PC-3 (cell line): ENCODE measurements at regions of chr14 and their contacts with region 1.

Region 1: DNA sequence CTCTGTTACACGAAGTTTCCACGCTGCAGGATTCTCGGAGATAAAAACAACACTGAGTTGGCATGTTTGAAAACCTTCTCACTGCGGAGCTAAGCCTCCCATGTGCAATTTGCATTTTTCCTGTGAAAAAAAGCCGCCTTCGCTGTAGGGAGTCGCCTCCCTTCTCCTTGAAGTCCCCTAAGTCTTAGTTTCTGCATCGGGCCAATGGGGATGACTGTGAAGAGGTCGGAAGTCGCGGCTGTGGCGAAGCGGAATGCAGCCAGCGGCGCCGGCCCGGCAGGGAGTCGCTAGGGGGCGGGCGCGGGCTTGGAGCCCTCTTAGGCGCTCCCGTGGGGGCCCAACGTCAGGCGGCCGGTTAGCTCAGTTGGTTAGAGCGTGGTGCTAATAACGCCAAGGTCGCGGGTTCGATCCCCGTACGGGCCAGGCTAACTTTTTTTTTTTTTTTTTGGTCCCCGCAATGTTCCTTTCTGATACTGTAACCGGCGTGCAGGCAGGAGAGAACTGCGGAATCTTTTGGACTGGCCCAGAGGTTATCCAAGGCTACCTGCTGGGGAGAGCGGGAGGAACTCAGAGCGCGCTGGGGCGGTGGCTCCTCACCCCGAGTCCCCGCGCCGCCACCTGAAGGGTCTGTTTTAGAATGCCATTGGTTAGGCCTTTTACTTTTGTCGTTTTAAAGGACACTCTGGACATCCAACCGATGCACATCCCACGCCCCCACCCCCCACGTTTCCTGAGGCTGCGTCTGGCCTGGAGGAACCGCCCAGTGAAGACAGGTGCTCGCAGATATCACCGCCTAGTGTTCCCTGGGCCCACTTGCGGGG is 2.6 kb upstream of the ZNF839 start:
- DNase-seq: peak; percentile 91
- ATAC-seq: peak; percentile 62
- H3K4me3 ChIP-seq: peak overlapping the region; percentile 72
- H3K27ac ChIP-seq: peak overlapping the region; percentile 61
- H3K4me1 ChIP-seq: peaks cover 56% of the 10 kb centered on the region
- H3K27me3 ChIP-seq: no peaks in the 10 kb centered on the region
- CTCF ChIP-seq: peak; percentile 67

Region 2: GRCh38 chr14:101972268-101972774 is 344.6 kb before region 1 on chr14:
- CTCF ChIA-PET with region 1: no interaction called
- POLR2A ChIA-PET with region 1: no interaction called
- intact Hi-C with region 1: loop called (anchors 5 kb)
- DNase-seq: peak; percentile 100
- ATAC-seq: peak; percentile 97
- H3K4me3 ChIP-seq: peak overlapping the region; percentile 59
- H3K27ac ChIP-seq: peak overlapping the region; percentile 99
- H3K4me1 ChIP-seq: peaks cover 72% of the 10 kb centered on the region
- H3K27me3 ChIP-seq: no peaks in the 10 kb centered on the region
- CTCF ChIP-seq: no peak

Region 3: GRCh38 chr14:102063091-102063802 is 253.7 kb before region 1 on chr14:
- CTCF ChIA-PET with region 1: no interaction called
- POLR2A ChIA-PET with region 1: no interaction called
- intact Hi-C with region 1: loop called (anchors 10 kb)
- DNase-seq: peak; percentile 96
- ATAC-seq: peak; percentile 94
- H3K4me3 ChIP-seq: peak overlapping the region; percentile 43
- H3K27ac ChIP-seq: peak overlapping the region; percentile 31
- H3K4me1 ChIP-seq: peaks cover 8% of the 10 kb centered on the region
- H3K27me3 ChIP-seq: no peaks in the 10 kb centered on the region
- CTCF ChIP-seq: peak; percentile 69

Region 4: DNA sequence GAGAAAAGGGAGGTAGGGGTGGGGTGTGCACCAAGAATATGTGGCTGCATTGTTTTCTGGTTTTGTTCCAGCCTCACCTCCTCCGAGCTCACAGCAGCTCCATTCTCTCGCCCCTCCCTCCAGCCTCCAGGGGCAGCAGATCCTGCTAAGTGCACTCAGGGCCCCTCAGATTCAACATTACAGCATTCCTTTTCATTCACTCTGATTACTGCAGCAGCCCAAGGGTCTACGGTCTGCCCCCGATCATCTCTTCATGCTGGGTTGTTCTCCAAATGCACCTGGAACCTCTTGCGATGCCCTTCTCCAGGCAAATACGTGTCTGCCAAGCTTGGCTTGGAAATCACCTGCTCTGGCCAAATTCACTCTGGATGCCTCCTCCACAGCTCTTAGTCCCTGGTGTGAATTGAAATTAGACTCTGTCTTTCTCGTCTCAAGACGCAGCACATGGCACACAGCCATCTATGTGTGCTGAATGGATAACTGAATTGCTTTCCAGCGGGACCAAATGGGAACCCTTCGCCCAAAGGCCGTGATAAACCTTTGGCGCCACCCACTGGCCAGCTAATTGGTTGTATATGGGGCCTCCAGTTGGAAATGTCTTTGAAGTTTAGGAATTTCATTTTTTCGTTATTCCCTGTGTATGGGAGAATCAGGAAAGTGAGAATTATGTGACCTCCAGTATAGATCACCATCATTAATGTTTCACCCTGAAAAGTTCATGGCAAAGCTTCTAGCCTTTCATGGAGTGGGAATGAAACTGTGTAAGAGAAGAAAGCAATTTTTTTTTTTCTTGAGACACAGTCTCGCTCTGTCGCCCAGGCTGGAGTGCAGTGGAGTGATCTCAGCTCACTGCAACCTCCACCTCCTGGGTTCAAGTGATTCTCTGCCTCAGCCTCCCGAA is 220.5 kb before region 1 on chr14:
- CTCF ChIA-PET with region 1: interaction called, 3 read pairs
- POLR2A ChIA-PET with region 1: interaction called, 24 read pairs
- intact Hi-C with region 1: loop called (anchors 10 kb)
- DNase-seq: peak; percentile 85
- ATAC-seq: peak; percentile 87
- H3K4me3 ChIP-seq: no peak overlapping the region
- H3K27ac ChIP-seq: no peak overlapping the region
- H3K4me1 ChIP-seq: peaks cover 28% of the 10 kb centered on the region
- H3K27me3 ChIP-seq: no peaks in the 10 kb centered on the region
- CTCF ChIP-seq: peak; percentile 93

Region 5: GRCh38 chr14:102139248-102140026 is 177.5 kb before region 1 on chr14 and contains the start of gene WDR20:
- CTCF ChIA-PET with region 1: no interaction called
- POLR2A ChIA-PET with region 1: no interaction called
- intact Hi-C with region 1: loop called (anchors 5 kb)
- DNase-seq: peak; percentile 99
- ATAC-seq: peak; percentile 85
- H3K4me3 ChIP-seq: peak within 1 kb of the TSS; percentile 75
- H3K27ac ChIP-seq: peak within 1 kb of the TSS; percentile 66
- H3K4me1 ChIP-seq: peaks cover 10% of the 10 kb centered on the region
- H3K27me3 ChIP-seq: no peaks in the 10 kb centered on the region
- CTCF ChIP-seq: peak; percentile 34; the same call in 1 of the 2 replicates
- total RNA-seq, gene WDR20: 23.7 and 24.2 TPM in 2 replicates

Region 6: DNA sequence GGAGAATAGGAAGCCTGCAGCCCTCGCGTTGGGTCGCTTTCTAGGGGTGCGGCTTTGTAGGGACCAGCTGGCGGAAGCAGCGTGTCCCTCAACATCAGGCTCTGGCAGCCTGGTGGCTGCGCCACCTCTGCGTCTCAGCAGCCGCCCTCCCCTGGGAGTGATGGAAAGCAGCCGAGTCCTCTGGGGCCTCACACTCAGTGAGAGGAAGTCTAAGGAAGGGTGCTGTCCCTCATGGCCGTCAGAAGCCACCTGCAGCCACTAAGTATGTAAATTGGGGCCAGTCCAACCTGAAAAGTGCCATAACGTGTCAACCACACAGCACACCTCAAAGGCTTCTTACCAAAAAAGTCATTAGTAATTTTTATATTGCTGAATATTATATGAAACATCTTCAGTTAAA is 96.9 kb before region 1 on chr14:
- CTCF ChIA-PET with region 1: interaction called, 9 read pairs
- POLR2A ChIA-PET with region 1: no interaction called
- intact Hi-C with region 1: loop called (anchors 5 kb)
- DNase-seq: no peak
- ATAC-seq: no peak
- H3K4me3 ChIP-seq: no peak overlapping the region
- H3K27ac ChIP-seq: no peak overlapping the region
- H3K4me1 ChIP-seq: peaks cover 36% of the 10 kb centered on the region
- H3K27me3 ChIP-seq: no peaks in the 10 kb centered on the region
- CTCF ChIP-seq: no peak

Region 7: GRCh38 chr14:102235275-102235897 is 81.6 kb before region 1 on chr14:
- CTCF ChIA-PET with region 1: interaction called, 4 read pairs
- POLR2A ChIA-PET with region 1: no interaction called
- intact Hi-C with region 1: loop called (anchors 1 kb)
- DNase-seq: peak; percentile 92
- ATAC-seq: peak; percentile 98
- H3K4me3 ChIP-seq: no peak overlapping the region
- H3K27ac ChIP-seq: peak overlapping the region; percentile 63
- H3K4me1 ChIP-seq: peaks cover 12% of the 10 kb centered on the region
- H3K27me3 ChIP-seq: no peaks in the 10 kb centered on the region
- CTCF ChIP-seq: peak; percentile 89